ENCODE measurements at regions of chr6 and their contacts with region 1.

Region 1: DNA sequence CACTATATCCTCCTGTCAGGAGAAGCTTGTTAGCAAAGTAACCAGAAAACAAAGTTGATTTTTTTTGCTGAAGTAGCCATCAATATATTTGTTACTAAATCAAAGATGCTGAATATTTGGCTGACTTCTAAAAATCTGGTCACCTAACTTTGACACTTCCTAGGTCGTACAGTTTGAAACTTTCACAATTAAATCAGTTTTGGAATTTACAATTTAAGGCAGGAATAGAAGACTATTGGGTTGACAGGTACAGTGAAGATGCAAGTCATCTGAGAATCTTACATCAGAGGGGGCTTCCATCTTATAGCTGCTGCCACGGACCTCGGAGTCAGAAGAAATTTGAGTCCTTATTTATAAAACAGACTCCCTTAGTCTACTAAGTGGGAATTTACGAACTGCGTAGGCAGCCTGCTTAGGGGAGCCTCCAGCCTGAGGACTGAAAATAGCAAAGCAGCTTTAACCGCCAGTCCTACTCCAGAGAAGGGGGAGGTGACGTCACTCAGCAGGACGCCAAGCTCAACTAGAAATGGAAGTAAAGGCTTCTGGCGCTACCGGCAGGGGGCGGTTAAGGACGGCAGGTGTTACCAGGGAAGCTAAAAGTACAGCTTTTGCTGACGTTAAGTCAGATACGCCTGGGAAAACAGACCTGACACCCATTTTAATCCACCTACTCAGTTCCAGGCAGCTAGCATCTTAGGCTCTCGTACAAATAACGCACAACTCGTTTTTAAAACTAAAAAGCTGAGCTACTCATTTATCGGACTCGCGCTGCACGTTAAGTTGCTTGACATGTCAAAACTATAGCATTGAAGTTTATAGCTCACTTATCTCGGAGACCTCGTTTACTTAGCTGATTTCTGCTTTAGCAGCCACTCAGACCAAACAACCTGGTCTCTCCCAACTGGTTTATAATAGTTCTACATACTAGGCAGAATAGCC is 61.1 kb upstream of the HFE start:
- DNase-seq: peak; percentile 90 to 98 (median 94)
- H3K4me3 ChIP-seq: peak overlapping the region; percentile 67 to 74
- H3K4me3 Mint-ChIP-seq: peak overlapping the region; percentile 85 to 98 (median 92)
- H3K27ac ChIP-seq: peak overlapping the region; percentile 89
- H3K27ac Mint-ChIP-seq: peak overlapping the region; percentile 96 to 100 (median 99)
- H3K4me1 ChIP-seq: peaks cover 29% of the 10 kb centered on the region
- H3K4me1 Mint-ChIP-seq: peaks cover 22 to 60% (median 39%) of the 10 kb centered on the region in 4 donors
- H3K27me3 ChIP-seq: no peaks in the 10 kb centered on the region
- H3K27me3 Mint-ChIP-seq: peaks cover 0 to 4% of the 10 kb centered on the region in 2 donors

Region 2: GRCh38 chr6:24214922-24215452 is 1811.2 kb before region 1 on chr6:
- CTCF ChIA-PET with region 1: no interaction called
- POLR2A ChIA-PET with region 1: no interaction called
- intact Hi-C with region 1: no loop called
- DNase-seq: no peak
- H3K4me3 ChIP-seq: no peak overlapping the region
- H3K4me3 Mint-ChIP-seq: no peak overlapping the region
- H3K27ac ChIP-seq: no peak overlapping the region
- H3K27ac Mint-ChIP-seq: no peak overlapping the region
- H3K4me1 ChIP-seq: no peaks in the 10 kb centered on the region
- H3K4me1 Mint-ChIP-seq: no peaks in the 10 kb centered on the region
- H3K27me3 ChIP-seq: no peaks in the 10 kb centered on the region
- H3K27me3 Mint-ChIP-seq: no peaks in the 10 kb centered on the region

Region 3: DNA sequence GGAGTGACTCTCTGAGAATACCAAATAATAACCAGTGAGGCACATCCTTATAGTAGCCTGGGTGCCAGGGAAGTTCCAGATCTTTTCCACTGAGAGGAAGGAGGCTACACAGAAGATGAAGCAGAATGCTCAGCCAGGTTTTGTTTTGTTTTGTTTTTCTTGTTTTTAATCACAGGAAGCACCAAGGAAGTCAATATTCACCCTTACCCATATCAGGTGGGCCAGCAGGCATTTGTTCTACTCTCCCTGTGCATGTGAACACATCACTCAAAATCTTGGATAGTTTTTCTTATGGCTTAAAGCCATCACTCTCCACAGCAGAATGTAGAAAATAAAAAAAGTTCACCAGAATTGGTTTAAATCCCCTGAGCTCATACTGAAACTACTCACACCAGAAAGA is 204.8 kb before region 1 on chr6:
- CTCF ChIA-PET with region 1: no interaction called
- POLR2A ChIA-PET with region 1: no interaction called
- intact Hi-C with region 1: no loop called
- DNase-seq: no peak
- H3K4me3 ChIP-seq: no peak overlapping the region
- H3K4me3 Mint-ChIP-seq: no peak overlapping the region
- H3K27ac ChIP-seq: no peak overlapping the region
- H3K27ac Mint-ChIP-seq: no peak overlapping the region
- H3K4me1 ChIP-seq: no peaks in the 10 kb centered on the region
- H3K4me1 Mint-ChIP-seq: peaks cover 0 to 6% (median under 1%) of the 10 kb centered on the region in 4 donors
- H3K27me3 ChIP-seq: no peaks in the 10 kb centered on the region
- H3K27me3 Mint-ChIP-seq: peaks cover 5 to 6% of the 10 kb centered on the region in 2 donors

Region 4: DNA sequence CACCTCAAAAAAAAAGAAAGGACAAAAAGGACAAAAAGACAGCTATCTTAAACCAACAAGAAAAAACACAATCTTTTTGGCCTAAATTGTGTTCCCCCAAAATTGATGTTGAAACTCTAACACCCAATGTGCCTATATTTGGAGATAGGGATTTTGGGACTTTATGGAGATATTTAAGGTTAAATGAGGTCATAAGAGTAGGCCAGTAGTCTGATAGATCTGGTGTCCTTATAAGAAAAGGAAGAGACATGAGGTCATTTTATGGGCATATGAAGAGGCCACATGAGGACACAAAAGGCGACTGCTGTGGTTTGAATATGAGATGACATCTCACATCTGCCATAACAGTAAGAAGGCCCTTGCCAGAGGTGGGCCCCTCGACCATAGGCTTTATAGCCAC is 14.1 kb before region 1 on chr6:
- CTCF ChIA-PET with region 1: interaction called, 34 read pairs
- POLR2A ChIA-PET with region 1: interaction called, 384 read pairs
- intact Hi-C with region 1: loop called (anchors 1 kb)
- DNase-seq: no peak
- H3K4me3 ChIP-seq: no peak overlapping the region
- H3K4me3 Mint-ChIP-seq: no peak overlapping the region
- H3K27ac ChIP-seq: no peak overlapping the region
- H3K27ac Mint-ChIP-seq: no peak overlapping the region
- H3K4me1 ChIP-seq: peaks cover 8% of the 10 kb centered on the region
- H3K4me1 Mint-ChIP-seq: peaks cover 0 to 7% (median 4%) of the 10 kb centered on the region in 4 donors
- H3K27me3 ChIP-seq: no peaks in the 10 kb centered on the region
- H3K27me3 Mint-ChIP-seq: no peaks in the 10 kb centered on the region

Region 5: DNA sequence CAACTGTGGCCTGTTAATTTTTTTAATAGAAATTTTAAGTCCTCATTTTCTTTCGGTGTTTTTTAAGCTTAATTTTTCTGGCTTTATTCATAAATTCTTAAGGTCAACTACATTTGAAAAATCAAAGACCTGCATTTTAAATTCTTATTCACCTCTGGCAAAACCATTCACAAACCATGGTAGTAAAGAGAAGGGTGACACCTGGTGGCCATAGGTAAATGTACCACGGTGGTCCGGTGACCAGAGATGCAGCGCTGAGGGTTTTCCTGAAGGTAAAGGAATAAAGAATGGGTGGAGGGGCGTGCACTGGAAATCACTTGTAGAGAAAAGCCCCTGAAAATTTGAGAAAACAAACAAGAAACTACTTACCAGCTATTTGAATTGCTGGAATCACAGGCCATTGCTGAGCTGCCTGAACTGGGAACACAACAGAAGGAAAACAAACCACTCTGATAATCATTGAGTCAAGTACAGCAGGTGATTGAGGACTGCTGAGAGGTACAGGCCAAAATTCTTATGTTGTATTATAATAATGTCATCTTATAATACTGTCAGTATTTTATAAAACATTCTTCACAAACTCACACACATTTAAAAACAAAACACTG is 71.2 kb after region 1 on chr6:
- CTCF ChIA-PET with region 1: interaction called, 26 read pairs
- POLR2A ChIA-PET with region 1: interaction called, 4 read pairs
- intact Hi-C with region 1: loop called (anchors 2 kb)
- DNase-seq: peak; percentile 61 to 68 (median 66)
- H3K4me3 ChIP-seq: no peak overlapping the region
- H3K4me3 Mint-ChIP-seq: no peak overlapping the region
- H3K27ac ChIP-seq: no peak overlapping the region
- H3K27ac Mint-ChIP-seq: peak overlapping the region in 1 of 7 donors; percentile 43
- H3K4me1 ChIP-seq: no peaks in the 10 kb centered on the region
- H3K4me1 Mint-ChIP-seq: peaks cover 0 to 5% (median 5%) of the 10 kb centered on the region in 4 donors
- H3K27me3 ChIP-seq: no peaks in the 10 kb centered on the region
- H3K27me3 Mint-ChIP-seq: peaks cover 2% of the 10 kb centered on the region in 2 donors

Region 6: DNA sequence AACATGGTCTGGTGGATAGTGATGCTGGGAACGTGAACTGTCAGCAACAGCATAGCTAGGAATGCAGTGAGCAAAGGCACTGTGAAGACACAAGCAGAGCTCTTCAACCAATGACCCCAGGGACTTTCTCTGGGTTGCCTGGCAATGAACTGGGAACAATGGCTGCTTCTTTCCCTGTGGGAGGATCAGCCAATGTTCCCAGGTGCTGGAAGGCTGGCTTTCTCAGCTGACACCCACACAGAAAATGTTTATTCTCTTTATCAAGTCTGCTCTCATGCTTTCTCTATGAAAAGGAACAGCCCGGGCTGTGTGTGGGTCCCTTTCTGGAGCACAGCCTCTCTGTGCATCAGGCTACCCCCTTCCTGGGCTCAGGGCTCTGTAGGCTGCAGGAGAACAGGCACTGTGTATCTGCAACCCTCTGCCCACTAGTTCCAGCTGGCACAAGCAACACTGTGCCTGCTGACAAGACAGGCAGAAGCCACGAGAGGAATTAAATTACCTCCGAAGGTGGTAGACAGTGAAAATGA is 115.3 kb after region 1 on chr6:
- CTCF ChIA-PET with region 1: no interaction called
- POLR2A ChIA-PET with region 1: no interaction called
- intact Hi-C with region 1: no loop called
- DNase-seq: no peak
- H3K4me3 ChIP-seq: no peak overlapping the region
- H3K4me3 Mint-ChIP-seq: no peak overlapping the region
- H3K27ac ChIP-seq: no peak overlapping the region
- H3K27ac Mint-ChIP-seq: no peak overlapping the region
- H3K4me1 ChIP-seq: no peaks in the 10 kb centered on the region
- H3K4me1 Mint-ChIP-seq: peaks cover 0 to 4% (median 3%) of the 10 kb centered on the region in 4 donors
- H3K27me3 ChIP-seq: no peaks in the 10 kb centered on the region
- H3K27me3 Mint-ChIP-seq: no peaks in the 10 kb centered on the region

Region 7: GRCh38 chr6:26196846-26197648 is 170.9 kb after region 1 on chr6:
- CTCF ChIA-PET with region 1: interaction called, 4 read pairs
- POLR2A ChIA-PET with region 1: interaction called, 100 read pairs
- intact Hi-C with region 1: loop called (anchors 2 kb)
- DNase-seq: peak; percentile 92 to 93 (median 92)
- H3K4me3 ChIP-seq: peak overlapping the region; percentile 83 to 97
- H3K4me3 Mint-ChIP-seq: peak overlapping the region; percentile 94 to 99 (median 97)
- H3K27ac ChIP-seq: peak overlapping the region; percentile 84
- H3K27ac Mint-ChIP-seq: peak overlapping the region; percentile 96 to 100 (median 98)
- H3K4me1 ChIP-seq: peaks cover 43% of the 10 kb centered on the region
- H3K4me1 Mint-ChIP-seq: peaks cover 23 to 57% (median 41%) of the 10 kb centered on the region in 4 donors
- H3K27me3 ChIP-seq: no peaks in the 10 kb centered on the region
- H3K27me3 Mint-ChIP-seq: no peaks in the 10 kb centered on the region

Region 8: GRCh38 chr6:26270903-26271667 is 244.9 kb after region 1 on chr6:
- CTCF ChIA-PET with region 1: interaction called, 3 read pairs
- POLR2A ChIA-PET with region 1: interaction called, 37 read pairs
- intact Hi-C with region 1: loop called (anchors 5 kb)
- DNase-seq: peak; percentile 84 to 87 (median 85)
- H3K4me3 ChIP-seq: peak overlapping the region; percentile 53 to 65
- H3K4me3 Mint-ChIP-seq: peak overlapping the region in 1 of 8 donors; percentile 85
- H3K27ac ChIP-seq: peak overlapping the region; percentile 83
- H3K27ac Mint-ChIP-seq: peak overlapping the region in 5 of 7 donors; percentile 68 to 97 (median 82)
- H3K4me1 ChIP-seq: peaks cover 31% of the 10 kb centered on the region
- H3K4me1 Mint-ChIP-seq: peaks cover 0 to 22% (median 15%) of the 10 kb centered on the region in 4 donors
- H3K27me3 ChIP-seq: no peaks in the 10 kb centered on the region
- H3K27me3 Mint-ChIP-seq: no peaks in the 10 kb centered on the region

Region 9: GRCh38 chr6:27753668-27754407 is 1727.7 kb after region 1 on chr6:
- CTCF ChIA-PET with region 1: no interaction called
- POLR2A ChIA-PET with region 1: interaction called, 3 read pairs
- intact Hi-C with region 1: loop called (anchors 5 kb)
- DNase-seq: peak; percentile 27 to 66 (median 44)
- H3K4me3 ChIP-seq: peak overlapping the region; percentile 50 to 63
- H3K4me3 Mint-ChIP-seq: peak overlapping the region; percentile 85 to 99 (median 93)
- H3K27ac ChIP-seq: no peak overlapping the region
- H3K27ac Mint-ChIP-seq: peak overlapping the region; percentile 16 to 100 (median 99)
- H3K4me1 ChIP-seq: peaks cover 20% of the 10 kb centered on the region
- H3K4me1 Mint-ChIP-seq: peaks cover 15 to 47% (median 26%) of the 10 kb centered on the region in 4 donors
- H3K27me3 ChIP-seq: no peaks in the 10 kb centered on the region
- H3K27me3 Mint-ChIP-seq: peaks cover 0 to 5% of the 10 kb centered on the region in 2 donors

Region 10: DNA sequence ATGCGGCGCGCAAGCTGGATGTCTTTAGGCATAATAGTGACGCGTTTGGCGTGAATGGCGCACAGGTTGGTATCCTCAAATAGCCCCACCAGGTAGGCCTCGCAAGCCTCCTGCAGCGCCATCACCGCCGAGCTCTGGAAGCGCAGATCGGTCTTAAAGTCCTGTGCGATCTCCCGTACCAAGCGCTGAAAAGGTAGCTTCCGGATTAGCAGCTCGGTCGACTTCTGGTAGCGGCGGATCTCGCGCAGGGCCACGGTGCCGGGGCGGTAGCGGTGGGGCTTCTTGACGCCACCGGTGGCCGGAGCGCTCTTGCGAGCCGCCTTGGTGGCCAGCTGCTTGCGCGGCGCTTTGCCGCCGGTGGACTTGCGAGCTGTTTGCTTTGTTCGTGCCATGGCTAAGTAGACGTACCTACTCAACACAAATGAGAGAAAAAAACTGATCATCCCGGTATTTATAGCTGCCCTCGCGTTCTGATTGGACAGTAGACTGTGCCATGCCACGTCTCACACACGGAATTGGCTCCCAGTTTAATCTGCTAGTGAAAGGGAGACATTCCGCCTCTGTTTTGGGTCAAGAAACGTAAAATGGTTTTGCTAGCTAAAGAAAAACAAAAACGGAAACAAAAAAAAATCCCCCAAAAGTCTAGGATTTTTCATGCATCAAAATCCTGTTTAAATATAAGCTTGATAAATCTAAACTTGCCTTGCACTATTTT is 1845.9 kb after region 1 on chr6:
- CTCF ChIA-PET with region 1: interaction called, 4 read pairs
- POLR2A ChIA-PET with region 1: interaction called, 45 read pairs
- intact Hi-C with region 1: loop called (anchors 2 kb)
- DNase-seq: peak; percentile 91 to 96 (median 94)
- H3K4me3 ChIP-seq: peak overlapping the region; percentile 77 to 89
- H3K4me3 Mint-ChIP-seq: peak overlapping the region; percentile 87 to 94 (median 90)
- H3K27ac ChIP-seq: peak overlapping the region; percentile 86
- H3K27ac Mint-ChIP-seq: peak overlapping the region; percentile 89 to 97 (median 94)
- H3K4me1 ChIP-seq: peaks cover 33% of the 10 kb centered on the region
- H3K4me1 Mint-ChIP-seq: peaks cover 24 to 48% (median 33%) of the 10 kb centered on the region in 4 donors
- H3K27me3 ChIP-seq: no peaks in the 10 kb centered on the region
- H3K27me3 Mint-ChIP-seq: no peaks in the 10 kb centered on the region